ENCODE measurements at regions of chr2 and their contacts with region 1.

Region 1: GRCh38 chr2:217714287-217714751 is 288.5 kb downstream of the TNS1 start:
- DNase-seq: peak in 1 of 2 donors; percentile 64
- H3K4me3 ChIP-seq: no peak overlapping the region
- H3K27ac ChIP-seq: peak overlapping the region; percentile 59 to 76
- H3K4me1 ChIP-seq: peaks cover 0 to 18% of the 10 kb centered on the region in 2 donors
- H3K27me3 ChIP-seq: no peaks in the 10 kb centered on the region
- CTCF ChIP-seq: no peak
- POLR2A ChIP-seq: no peak

Region 2: DNA sequence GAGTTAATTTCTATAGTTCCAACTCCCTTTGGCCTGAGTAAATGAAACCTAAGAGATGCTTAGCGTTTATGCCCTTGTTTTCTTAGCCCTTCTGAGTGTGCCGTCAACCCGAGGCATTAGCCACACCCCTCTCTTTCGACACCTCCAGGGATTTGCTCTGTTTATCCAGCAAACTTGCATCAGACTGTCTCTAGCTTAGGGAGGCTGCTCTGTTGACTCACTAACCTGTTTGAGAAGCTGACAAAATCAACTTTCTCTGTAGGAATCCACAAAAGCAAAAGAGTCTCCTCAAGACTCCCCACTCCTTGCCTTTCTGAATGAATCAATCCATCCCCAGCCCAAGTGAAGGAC is 29.1 kb before region 1 on chr2:
- intact Hi-C with region 1: loop called (anchors 1 kb)
- DNase-seq: peak; percentile 62 to 79
- H3K4me3 ChIP-seq: no peak overlapping the region
- H3K27ac ChIP-seq: peak overlapping the region; percentile 56 to 76
- H3K4me1 ChIP-seq: peaks cover 0 to 11% of the 10 kb centered on the region in 2 donors
- H3K27me3 ChIP-seq: no peaks in the 10 kb centered on the region
- CTCF ChIP-seq: no peak
- POLR2A ChIP-seq: no peak

Region 3: GRCh38 chr2:217732992-217733391 is 18.7 kb after region 1 on chr2:
- intact Hi-C with region 1: no loop called
- DNase-seq: no peak
- H3K4me3 ChIP-seq: no peak overlapping the region
- H3K27ac ChIP-seq: peak overlapping the region in 1 of 2 donors; percentile 30
- H3K4me1 ChIP-seq: no peaks in the 10 kb centered on the region
- H3K27me3 ChIP-seq: no peaks in the 10 kb centered on the region
- CTCF ChIP-seq: no peak
- POLR2A ChIP-seq: no peak

Region 4: GRCh38 chr2:217880287-217880889 is 166.1 kb after region 1 on chr2:
- intact Hi-C with region 1: no loop called
- DNase-seq: no peak
- H3K4me3 ChIP-seq: no peak overlapping the region
- H3K27ac ChIP-seq: peak overlapping the region in 1 of 2 donors; percentile 28
- H3K4me1 ChIP-seq: no peaks in the 10 kb centered on the region
- H3K27me3 ChIP-seq: no peaks in the 10 kb centered on the region
- CTCF ChIP-seq: no peak
- POLR2A ChIP-seq: no peak